Tibial artery (tissue), 4 donors: ENCODE measurements at regions of chr13 and their contacts with region 1.

Region 1: DNA sequence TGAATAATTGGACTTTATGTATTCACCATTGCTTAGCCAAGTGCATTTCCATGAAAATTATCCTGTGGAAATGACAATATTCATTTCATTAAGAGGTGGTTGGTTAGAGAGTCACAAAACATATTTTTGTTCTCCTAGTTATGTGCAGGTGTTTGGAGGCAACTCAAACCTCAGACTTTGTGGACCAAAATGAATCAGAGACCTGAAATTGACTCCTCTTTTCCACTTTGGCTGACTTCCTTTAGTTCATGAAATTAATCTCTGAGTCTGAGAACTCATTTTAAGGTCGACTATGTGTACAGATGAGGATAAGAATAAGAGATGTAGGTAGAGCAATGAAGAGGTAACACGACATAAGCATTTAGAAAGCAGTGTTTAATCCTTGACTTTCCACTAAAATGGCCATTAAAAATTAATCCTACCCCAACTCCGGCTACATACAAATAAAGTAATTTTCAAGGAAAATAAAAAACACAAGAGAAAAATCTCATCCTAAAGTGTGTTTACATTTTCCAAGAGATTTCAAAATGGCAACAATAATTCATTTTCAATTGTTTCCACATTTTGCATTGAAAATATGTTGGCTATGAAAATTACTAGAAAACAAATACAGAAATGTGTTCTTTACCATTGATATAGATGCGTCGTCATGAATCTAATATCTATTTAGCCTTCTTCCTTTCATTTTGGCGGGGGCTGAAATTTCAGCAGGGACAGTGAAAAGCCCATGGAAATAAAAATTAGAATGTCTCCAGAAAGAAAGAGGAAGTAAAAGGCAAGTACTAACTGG is 185.4 kb upstream of the CSNK1A1L start:
- DNase-seq: no peak
- H3K4me3 ChIP-seq: no peak overlapping the region
- H3K27ac ChIP-seq: no peak overlapping the region
- H3K4me1 ChIP-seq: no peaks in the 10 kb centered on the region
- H3K27me3 ChIP-seq: no peaks in the 10 kb centered on the region
- CTCF ChIP-seq: no peak

Region 2: DNA sequence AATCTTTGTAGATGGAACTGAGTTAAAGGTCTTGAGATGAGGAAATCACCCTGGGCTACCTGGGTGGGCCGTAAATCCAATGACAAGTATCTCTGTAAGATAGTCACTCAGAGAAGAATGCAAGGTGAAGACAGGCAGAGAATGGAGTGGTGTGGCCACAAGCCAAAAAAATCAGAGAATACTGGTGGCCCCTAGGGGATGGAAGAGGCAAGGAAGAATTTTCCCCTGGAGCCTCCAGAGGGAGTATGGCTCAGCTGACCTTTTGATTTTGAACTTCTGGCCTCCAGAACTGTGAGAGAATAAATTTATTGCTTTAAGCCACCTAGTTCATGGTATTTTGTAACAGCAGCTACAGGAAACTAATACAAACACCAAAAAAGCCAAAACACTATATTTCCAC is 152.7 kb before region 1 on chr13:
- intact Hi-C with region 1: no loop called
- DNase-seq: no peak
- H3K4me3 ChIP-seq: no peak overlapping the region
- H3K27ac ChIP-seq: no peak overlapping the region
- H3K4me1 ChIP-seq: peaks cover 0 to 8% (median 0%) of the 10 kb centered on the region in 4 donors
- H3K27me3 ChIP-seq: no peaks in the 10 kb centered on the region
- CTCF ChIP-seq: no peak

Region 3: GRCh38 chr13:37209621-37210580 is 81.0 kb before region 1 on chr13:
- intact Hi-C with region 1: no loop called
- DNase-seq: no peak
- H3K4me3 ChIP-seq: no peak overlapping the region
- H3K27ac ChIP-seq: no peak overlapping the region
- H3K4me1 ChIP-seq: peaks cover 0 to 16% (median 0%) of the 10 kb centered on the region in 4 donors
- H3K27me3 ChIP-seq: no peaks in the 10 kb centered on the region
- CTCF ChIP-seq: no peak

Region 4: DNA sequence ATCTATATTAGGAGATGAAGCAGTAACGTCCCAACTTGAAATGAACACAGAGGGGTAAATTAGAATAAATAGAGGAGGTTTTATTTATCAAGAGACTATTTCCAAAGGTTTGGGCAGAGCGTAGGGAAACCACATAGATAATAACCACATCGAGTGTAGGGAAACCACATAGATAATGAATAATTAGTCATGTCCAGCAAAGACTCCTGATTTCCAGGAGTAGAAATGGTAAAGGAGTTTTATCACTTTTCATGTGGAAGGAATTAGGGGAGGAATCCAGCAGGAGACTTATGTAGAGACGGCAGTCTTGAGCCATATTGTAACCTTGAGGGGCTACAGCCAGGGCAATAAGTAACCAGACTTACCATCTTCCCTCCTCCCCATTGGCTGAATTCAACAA is 49.1 kb before region 1 on chr13:
- intact Hi-C with region 1: loop called (anchors 2 kb)
- DNase-seq: no peak
- H3K4me3 ChIP-seq: no peak overlapping the region
- H3K27ac ChIP-seq: no peak overlapping the region
- H3K4me1 ChIP-seq: no peaks in the 10 kb centered on the region
- H3K27me3 ChIP-seq: no peaks in the 10 kb centered on the region
- CTCF ChIP-seq: no peak

Region 5: DNA sequence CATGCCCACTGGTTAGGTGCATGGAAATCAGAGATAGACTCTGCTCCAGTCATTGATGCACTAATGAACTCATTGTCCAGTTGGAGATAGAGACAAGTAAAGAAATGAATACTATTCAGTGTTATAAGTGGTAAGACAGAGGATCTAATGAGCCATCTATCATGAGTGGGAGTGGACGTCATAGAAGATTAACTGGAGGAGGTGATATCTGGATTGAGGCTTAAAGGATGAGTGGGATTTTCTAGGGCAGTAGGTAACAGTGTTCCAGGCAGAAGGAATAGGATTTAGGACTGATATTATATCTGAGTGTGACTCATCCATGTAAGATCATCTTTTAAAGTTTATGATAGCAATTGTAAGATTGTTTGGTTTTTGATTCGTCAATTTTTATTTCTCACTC is 33.2 kb before region 1 on chr13:
- intact Hi-C with region 1: no loop called
- DNase-seq: no peak
- H3K4me3 ChIP-seq: no peak overlapping the region
- H3K27ac ChIP-seq: no peak overlapping the region
- H3K4me1 ChIP-seq: no peaks in the 10 kb centered on the region
- H3K27me3 ChIP-seq: no peaks in the 10 kb centered on the region
- CTCF ChIP-seq: no peak